Sciatic nerve (tissue), 2 donors: ENCODE measurements at regions of chr2 and their contacts with region 1.

Region 1: DNA sequence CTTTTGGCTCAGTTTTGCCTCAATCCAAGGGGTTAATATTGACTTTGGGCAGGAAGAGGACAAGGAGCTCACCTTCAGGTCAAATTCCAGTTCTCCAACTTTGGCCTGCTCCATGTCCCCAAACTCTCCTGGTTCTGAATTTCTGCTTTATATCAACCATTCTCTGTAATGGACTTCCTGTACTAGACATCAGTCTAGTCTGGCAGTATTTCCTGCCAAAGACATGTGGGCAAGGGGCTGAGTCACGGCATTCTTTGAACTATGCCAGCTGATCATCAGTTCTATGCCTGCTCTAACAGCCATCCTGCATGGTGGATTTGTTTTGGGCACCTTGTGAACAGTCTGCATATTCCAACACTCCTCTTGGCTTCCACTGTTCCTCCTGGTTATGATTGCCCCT is 199.4 kb downstream of the ZEB2 start:
- DNase-seq: no peak
- ATAC-seq: peak; percentile 42

Region 2: GRCh38 chr2:146239392-146240135 is 1919.1 kb after region 1 on chr2:
- intact Hi-C with region 1: loop called (anchors 5 kb)
- DNase-seq: no peak
- ATAC-seq: peak; percentile 82